ENCODE measurements at regions of chr7 and their contacts with region 1.

Region 1: GRCh38 chr7:94374231-94374630 is 20.5 kb upstream of the COL1A2 start:
- DNase-seq: peak; percentile 83
- H3K4me3 ChIP-seq: peak overlapping the region; percentile 43
- H3K27me3 ChIP-seq: no peaks in the 10 kb centered on the region
- CTCF ChIP-seq: no peak

Region 2: DNA sequence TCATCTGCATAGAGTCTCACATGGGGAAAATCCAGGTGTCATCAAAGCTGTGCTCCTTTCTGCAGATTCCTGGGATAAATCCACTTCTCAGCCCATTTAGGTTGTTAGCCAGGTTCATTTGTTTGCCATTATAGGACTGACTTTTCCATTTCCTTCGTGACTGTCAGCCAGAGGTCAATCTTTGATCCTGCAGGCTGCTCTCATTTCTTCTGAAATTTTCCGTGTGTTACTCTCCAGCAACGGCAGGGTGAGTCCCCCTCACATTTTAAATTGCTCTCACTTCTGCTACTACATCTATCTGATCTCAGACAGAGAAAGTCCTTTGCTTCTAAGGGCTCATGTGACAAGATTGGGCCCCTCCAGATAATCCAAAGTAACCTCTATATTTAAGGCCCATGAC is 219.4 kb before region 1 on chr7:
- CTCF ChIA-PET with region 1: no interaction called
- POLR2A ChIA-PET with region 1: no interaction called
- DNase-seq: no peak
- H3K4me3 ChIP-seq: no peak overlapping the region
- H3K27me3 ChIP-seq: no peaks in the 10 kb centered on the region
- CTCF ChIP-seq: no peak

Region 3: DNA sequence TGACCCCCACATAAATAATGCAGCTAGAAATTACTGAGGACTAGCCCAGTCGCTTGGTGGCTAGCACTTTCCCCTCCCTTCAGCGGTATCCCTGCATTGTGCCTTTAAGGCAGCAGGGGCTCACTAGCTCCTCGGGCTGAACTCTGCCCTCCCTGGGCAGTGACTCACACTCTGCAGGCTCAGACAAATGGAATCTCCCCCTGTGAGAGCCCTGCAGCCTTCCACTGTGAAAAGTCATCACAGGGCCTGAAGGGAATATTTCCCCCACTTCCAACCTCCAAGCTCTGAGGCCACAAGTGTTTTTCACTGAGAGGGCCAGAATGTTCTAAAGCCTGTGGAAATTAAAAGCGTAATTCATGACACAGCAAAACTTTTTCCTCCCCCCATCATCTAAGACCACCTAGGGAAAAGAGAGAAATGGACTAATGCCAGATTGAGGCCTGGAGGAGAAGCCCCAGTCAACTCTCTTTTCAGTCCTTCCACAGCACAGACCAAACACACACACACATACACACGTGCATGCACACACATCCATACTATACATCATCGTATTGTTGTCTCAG is 73.1 kb before region 1 on chr7:
- CTCF ChIA-PET with region 1: interaction called, 31 read pairs
- POLR2A ChIA-PET with region 1: interaction called, 104 read pairs
- DNase-seq: peak; percentile 90
- H3K4me3 ChIP-seq: peak overlapping the region; percentile 5; the same call in 1 of the 2 replicates
- H3K27me3 ChIP-seq: no peaks in the 10 kb centered on the region
- CTCF ChIP-seq: peak; percentile 26; the same call in 1 of the 2 replicates

Measured in BJ (cell line).